GM10248 (cell line): ENCODE measurements at regions of chr17 and their contacts with region 1.

Region 1: GRCh38 chr17:45235416-45236281 is 14.0 kb downstream of the FMNL1 start:
- DNase-seq: peak; percentile 76
- CTCF ChIP-seq: peak; percentile 72

Region 2: GRCh38 chr17:45247429-45248131 is 11.9 kb after region 1 on chr17:
- CTCF ChIA-PET with region 1: interaction called, 36 read pairs
- POLR2A ChIA-PET with region 1: no interaction called
- DNase-seq: peak; percentile 99
- CTCF ChIP-seq: no peak